ENCODE measurements at regions of chr12 and their contacts with region 1.

Region 1: GRCh38 chr12:51368640-51369517 is 22.3 kb downstream of the GALNT6 start:
- DNase-seq: peak; percentile 98
- ATAC-seq: peak; percentile 96
- H3K4me3 ChIP-seq: peak overlapping the region in 4 of 5 experiments; percentile 14 to 44 (median 20)
- H3K4me3 Mint-ChIP-seq: peak overlapping the region; percentile 42
- H3K27ac ChIP-seq: peak overlapping the region; percentile 74 to 77
- H3K27ac Mint-ChIP-seq: peak overlapping the region; percentile 97
- H3K4me1 ChIP-seq: peaks cover 51 to 61% of the 10 kb centered on the region in 2 donors
- H3K4me1 Mint-ChIP-seq: peaks cover 54% of the 10 kb centered on the region
- H3K27me3 ChIP-seq: no peaks in the 10 kb centered on the region
- H3K27me3 Mint-ChIP-seq: no peaks in the 10 kb centered on the region
- CTCF ChIP-seq: no peak

Region 2: DNA sequence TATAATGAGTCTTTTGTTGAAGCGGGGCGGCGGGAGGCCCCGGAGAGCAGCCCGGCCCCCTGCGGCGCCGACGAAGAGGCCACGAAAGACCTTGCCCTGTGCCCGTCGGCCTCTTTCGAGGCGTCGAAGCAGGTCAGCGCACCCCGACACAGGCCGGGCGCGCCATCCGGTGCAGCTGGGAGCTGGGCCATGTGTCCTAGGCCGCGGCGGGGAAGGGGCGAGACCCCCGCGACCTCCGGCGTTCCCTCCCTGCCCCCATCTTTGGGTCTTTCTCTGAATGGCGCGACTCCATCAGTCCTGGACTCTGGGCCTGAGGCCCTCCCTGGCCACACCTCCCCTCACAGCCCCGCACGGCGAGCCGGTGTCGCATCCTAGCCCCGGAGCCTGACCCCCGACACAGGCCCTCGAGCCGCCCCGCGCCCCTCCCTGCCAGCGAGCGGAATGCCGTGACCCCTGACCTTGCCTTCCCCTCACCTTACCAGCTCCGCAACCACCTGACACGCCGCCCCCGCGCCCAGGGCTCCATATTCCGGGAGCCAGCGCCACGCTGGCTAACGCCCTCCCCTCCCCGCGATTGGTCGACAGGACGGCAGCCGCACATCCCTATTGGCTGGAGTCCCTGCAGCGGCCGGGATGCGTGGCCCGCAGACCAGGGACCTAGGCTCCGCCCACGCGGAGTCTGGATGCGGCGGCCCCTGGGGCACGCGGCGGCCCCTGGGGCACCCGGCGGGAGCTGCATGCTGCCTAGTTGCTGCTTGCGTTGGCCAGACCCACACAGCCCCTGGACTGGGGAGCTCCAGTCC is 342.8 kb before region 1 on chr12 and contains the start of gene SLC11A2:
- CTCF ChIA-PET with region 1: no interaction called
- POLR2A ChIA-PET with region 1: no interaction called
- intact Hi-C with region 1: no loop called
- DNase-seq: peak; percentile 92
- ATAC-seq: peak; percentile 98
- H3K4me3 ChIP-seq: peak within 1 kb of the TSS; percentile 34 to 97 (median 78)
- H3K4me3 Mint-ChIP-seq: peak within 1 kb of the TSS; percentile 94
- H3K27ac ChIP-seq: peak within 1 kb of the TSS; percentile 71 to 74
- H3K27ac Mint-ChIP-seq: peak within 1 kb of the TSS; percentile 93
- H3K4me1 ChIP-seq: peaks cover 13 to 28% of the 10 kb centered on the region in 2 donors
- H3K4me1 Mint-ChIP-seq: peaks cover 36% of the 10 kb centered on the region
- H3K27me3 ChIP-seq: peaks cover 0 to 3% (median 0%) of the 10 kb centered on the region in 4 experiments
- H3K27me3 Mint-ChIP-seq: peaks cover 4% of the 10 kb centered on the region
- CTCF ChIP-seq: no peak
- total RNA-seq, gene SLC11A2: 42.0 and 45.7 TPM in 2 replicates

Region 3: DNA sequence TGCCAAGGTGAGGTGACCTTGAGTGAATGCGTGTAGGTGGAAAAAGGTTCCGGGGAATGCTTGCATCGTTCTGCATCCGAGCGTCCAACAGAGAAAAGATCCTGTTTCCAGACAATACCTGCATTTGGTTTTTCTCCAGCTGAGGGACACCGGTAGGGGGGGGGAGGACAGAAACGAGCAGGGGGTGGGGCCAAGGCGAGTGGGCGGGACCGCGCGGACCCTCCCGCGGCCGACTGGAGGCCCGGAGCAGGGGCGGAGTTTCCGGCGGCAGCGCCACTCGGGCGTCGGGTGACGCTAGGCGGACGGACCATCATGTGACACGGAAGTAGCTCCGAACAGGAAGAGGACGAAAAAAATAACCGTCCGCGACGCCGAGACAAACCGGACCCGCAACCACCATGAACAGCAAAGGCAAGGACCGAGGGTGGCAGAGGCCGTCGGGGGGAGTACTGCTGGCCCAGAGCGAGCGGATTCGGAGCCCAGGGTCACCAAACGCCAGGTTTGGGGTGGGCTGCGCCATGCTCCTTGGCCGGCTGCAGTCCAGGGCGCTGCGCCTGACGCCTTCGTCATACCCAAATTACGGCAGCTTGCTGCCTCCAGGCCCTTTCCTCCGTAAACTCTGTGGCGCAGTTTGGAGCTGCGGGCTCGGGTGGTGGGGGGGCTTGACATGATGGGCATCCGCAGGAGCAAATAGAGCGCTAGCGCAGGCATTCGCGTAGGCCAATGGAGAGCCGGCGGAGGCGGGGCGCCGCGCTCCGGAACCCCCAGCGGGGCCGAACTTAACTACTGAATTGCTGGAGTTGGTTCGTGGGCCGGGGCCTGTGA is 130.2 kb before region 1 on chr12 and contains the start of gene DAZAP2:
- CTCF ChIA-PET with region 1: no interaction called
- POLR2A ChIA-PET with region 1: no interaction called
- intact Hi-C with region 1: loop called (anchors 1 kb)
- DNase-seq: peak; percentile 98
- ATAC-seq: peak; percentile 92
- H3K4me3 ChIP-seq: peak within 1 kb of the TSS; percentile 69 to 100 (median 100)
- H3K4me3 Mint-ChIP-seq: peak within 1 kb of the TSS; percentile 93
- H3K27ac ChIP-seq: peak within 1 kb of the TSS; percentile 100
- H3K27ac Mint-ChIP-seq: peak within 1 kb of the TSS; percentile 100
- H3K4me1 ChIP-seq: peaks cover 24 to 34% of the 10 kb centered on the region in 2 donors
- H3K4me1 Mint-ChIP-seq: peaks cover 40% of the 10 kb centered on the region
- H3K27me3 ChIP-seq: no peaks in the 10 kb centered on the region
- H3K27me3 Mint-ChIP-seq: no peaks in the 10 kb centered on the region
- CTCF ChIP-seq: peak; percentile 31
- total RNA-seq, gene DAZAP2: 219 and 233 TPM in 2 replicates

Region 4: DNA sequence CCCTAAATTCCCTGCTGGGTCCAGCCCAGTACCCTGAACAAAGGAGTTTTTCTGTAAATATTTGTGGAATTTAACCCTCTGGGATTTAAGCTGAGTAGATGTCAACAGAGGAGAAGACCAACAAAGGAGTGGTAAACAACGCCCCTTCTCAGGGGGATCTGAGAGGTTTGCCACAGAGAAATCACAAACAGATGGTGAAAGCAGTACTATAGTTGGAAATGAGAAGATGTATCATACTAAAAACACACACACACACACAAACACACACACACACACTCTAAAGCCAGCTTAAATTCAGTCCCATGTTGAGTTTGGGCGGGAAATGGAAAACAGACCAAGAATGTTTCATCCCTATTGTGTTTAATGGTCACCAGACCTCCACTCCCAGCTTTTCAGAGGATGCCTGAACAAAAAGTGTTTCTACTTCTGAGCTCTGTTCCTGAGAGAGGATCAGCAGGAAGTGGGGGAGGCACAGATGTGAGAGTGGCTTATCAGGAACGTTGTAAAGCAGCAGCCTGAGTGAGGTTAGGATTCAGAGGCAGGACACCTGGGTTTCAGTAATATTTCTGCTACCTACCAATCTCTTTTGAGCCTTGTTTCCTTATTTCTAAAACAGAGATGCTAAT is 48.1 kb before region 1 on chr12:
- CTCF ChIA-PET with region 1: interaction called, 11 read pairs
- POLR2A ChIA-PET with region 1: interaction called, 3 read pairs
- intact Hi-C with region 1: loop called (anchors 1 kb)
- DNase-seq: no peak
- ATAC-seq: no peak
- H3K4me3 ChIP-seq: peak overlapping the region in 3 of 5 experiments; percentile 15 to 41 (median 26)
- H3K4me3 Mint-ChIP-seq: peak overlapping the region; percentile 64
- H3K27ac ChIP-seq: peak overlapping the region; percentile 4 to 88
- H3K27ac Mint-ChIP-seq: peak overlapping the region; percentile 99
- H3K4me1 ChIP-seq: peaks cover 68 to 80% of the 10 kb centered on the region in 2 donors
- H3K4me1 Mint-ChIP-seq: peaks cover 86% of the 10 kb centered on the region
- H3K27me3 ChIP-seq: no peaks in the 10 kb centered on the region
- H3K27me3 Mint-ChIP-seq: no peaks in the 10 kb centered on the region
- CTCF ChIP-seq: no peak

Region 5: DNA sequence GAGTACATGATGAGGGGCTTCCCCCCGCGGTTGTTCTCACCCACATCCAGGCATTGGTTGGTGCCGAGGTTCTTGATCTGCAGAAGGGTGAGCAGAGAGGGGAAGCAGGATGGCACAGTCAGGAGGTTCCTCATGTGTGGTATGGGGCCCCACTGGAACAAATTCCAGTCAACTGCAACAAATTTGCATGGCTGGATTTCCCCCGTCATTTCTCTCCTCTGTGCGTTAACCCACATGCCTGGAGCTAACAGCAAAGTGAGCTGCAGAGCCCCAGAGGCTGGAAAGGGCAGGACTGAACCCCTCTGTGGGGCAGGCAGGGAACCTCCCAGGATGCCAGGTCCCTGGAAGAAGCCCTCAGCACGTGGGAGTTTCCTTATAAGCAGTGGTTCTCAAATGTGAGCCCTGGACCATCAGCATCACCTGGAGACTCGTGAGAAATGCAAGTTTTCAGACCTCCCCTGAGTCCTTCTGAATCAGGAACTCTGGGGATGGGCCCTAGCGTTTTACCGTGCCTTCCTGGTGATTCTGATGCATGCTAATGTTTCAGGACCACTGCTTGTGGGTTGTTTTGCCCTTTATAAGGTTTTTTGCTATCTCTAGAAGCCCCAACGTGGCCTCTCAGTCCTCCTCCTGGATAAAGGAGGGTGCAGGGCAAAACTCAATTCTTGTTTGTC is 11.4 kb before region 1 on chr12:
- CTCF ChIA-PET with region 1: interaction called, 10 read pairs
- POLR2A ChIA-PET with region 1: no interaction called
- intact Hi-C with region 1: loop called (anchors 1 kb)
- DNase-seq: peak; percentile 88
- ATAC-seq: peak; percentile 83
- H3K4me3 ChIP-seq: peak overlapping the region in 2 of 5 experiments; percentile 4 to 6
- H3K4me3 Mint-ChIP-seq: peak overlapping the region; percentile 73
- H3K27ac ChIP-seq: peak overlapping the region in 1 of 2 donors; percentile 57
- H3K27ac Mint-ChIP-seq: peak overlapping the region; percentile 53
- H3K4me1 ChIP-seq: peaks cover 30 to 43% of the 10 kb centered on the region in 2 donors
- H3K4me1 Mint-ChIP-seq: peaks cover 39% of the 10 kb centered on the region
- H3K27me3 ChIP-seq: no peaks in the 10 kb centered on the region
- H3K27me3 Mint-ChIP-seq: no peaks in the 10 kb centered on the region
- CTCF ChIP-seq: no peak

Region 6: GRCh38 chr12:51424662-51425438 is 56.0 kb after region 1 on chr12 and contains the start of gene SLC4A8:
- CTCF ChIA-PET with region 1: interaction called, 8 read pairs
- POLR2A ChIA-PET with region 1: no interaction called
- intact Hi-C with region 1: loop called (anchors 1 kb)
- DNase-seq: peak; percentile 87
- ATAC-seq: peak; percentile 94
- H3K4me3 ChIP-seq: peak within 1 kb of the TSS in 4 of 5 experiments; percentile 62 to 76 (median 68)
- H3K4me3 Mint-ChIP-seq: peak within 1 kb of the TSS; percentile 68
- H3K27ac ChIP-seq: peak within 1 kb of the TSS in 1 of 2 donors; percentile 23
- H3K27ac Mint-ChIP-seq: peak within 1 kb of the TSS; percentile 50
- H3K4me1 ChIP-seq: peaks cover 15 to 19% of the 10 kb centered on the region in 2 donors
- H3K4me1 Mint-ChIP-seq: peaks cover 22% of the 10 kb centered on the region
- H3K27me3 ChIP-seq: no peaks in the 10 kb centered on the region
- H3K27me3 Mint-ChIP-seq: no peaks in the 10 kb centered on the region
- CTCF ChIP-seq: peak; percentile 86
- total RNA-seq, gene SLC4A8: 3.0 and 3.2 TPM in 2 replicates